Prostate gland (tissue), 2 donors: ENCODE measurements at regions of chr3 and their contacts with region 1.

Region 1: GRCh38 chr3:150787741-150788370 is 24.9 kb upstream of the SIAH2 start:
- DNase-seq: peak; percentile 77
- H3K4me3 ChIP-seq: no peak overlapping the region
- H3K27ac ChIP-seq: no peak overlapping the region
- H3K4me1 ChIP-seq: no peaks in the 10 kb centered on the region
- H3K27me3 ChIP-seq: no peaks in the 10 kb centered on the region
- CTCF ChIP-seq: peak; percentile 80 to 87 (median 82)
- POLR2A ChIP-seq: no peak

Region 2: DNA sequence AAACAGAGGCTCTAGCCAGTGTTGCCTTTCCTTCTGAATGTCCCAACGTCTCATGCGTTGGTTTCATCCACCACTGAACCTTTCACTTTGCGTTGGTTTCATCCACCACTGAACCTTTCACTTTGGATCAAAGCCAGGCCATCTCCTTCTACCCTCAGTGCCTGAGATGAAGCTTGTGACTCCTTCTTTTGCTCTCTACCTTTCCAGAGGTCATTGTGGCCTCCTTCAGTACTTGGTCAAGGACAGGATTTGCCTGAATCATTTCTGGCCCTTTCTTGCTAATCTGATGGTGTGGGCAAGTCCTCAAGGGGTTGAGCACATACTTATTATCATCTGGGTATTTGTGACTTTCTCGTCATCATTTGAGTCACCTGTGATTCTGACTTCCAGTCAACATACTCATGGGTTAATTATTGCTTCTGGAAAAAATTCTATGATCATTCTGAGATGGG is 134.7 kb before region 1 on chr3:
- intact Hi-C with region 1: no loop called
- DNase-seq: no peak
- H3K4me3 ChIP-seq: no peak overlapping the region
- H3K27ac ChIP-seq: no peak overlapping the region
- H3K4me1 ChIP-seq: no peaks in the 10 kb centered on the region
- H3K27me3 ChIP-seq: no peaks in the 10 kb centered on the region
- CTCF ChIP-seq: no peak
- POLR2A ChIP-seq: no peak

Region 3: GRCh38 chr3:150861851-150862250 is 74.0 kb after region 1 on chr3:
- intact Hi-C with region 1: loop called (anchors 5 kb)
- DNase-seq: no peak
- H3K4me3 ChIP-seq: no peak overlapping the region
- H3K27ac ChIP-seq: no peak overlapping the region
- H3K4me1 ChIP-seq: no peaks in the 10 kb centered on the region
- H3K27me3 ChIP-seq: no peaks in the 10 kb centered on the region
- CTCF ChIP-seq: no peak
- POLR2A ChIP-seq: no peak

Region 4: GRCh38 chr3:151146071-151146730 is 358.3 kb after region 1 on chr3:
- intact Hi-C with region 1: loop called (anchors 5 kb)
- DNase-seq: peak; percentile 67
- H3K4me3 ChIP-seq: no peak overlapping the region
- H3K27ac ChIP-seq: peak overlapping the region; percentile 60 to 65
- H3K4me1 ChIP-seq: peaks cover 9% of the 10 kb centered on the region
- H3K27me3 ChIP-seq: no peaks in the 10 kb centered on the region
- CTCF ChIP-seq: peak; percentile 60 to 88 (median 84)
- POLR2A ChIP-seq: no peak